ENCODE measurements at regions of chr1 and their contacts with region 1.

Region 1: GRCh38 chr1:48498096-48498791 is 26.2 kb upstream of the SPATA6 start:
- DNase-seq: peak; percentile 58 to 92
- H3K4me3 ChIP-seq: no peak overlapping the region
- H3K27ac ChIP-seq: no peak overlapping the region
- H3K4me1 ChIP-seq: peaks cover 0 to 21% (median 11%) of the 10 kb centered on the region in 4 experiments; a peak in 5 of 7 replicates
- H3K27me3 ChIP-seq: no peaks in the 10 kb centered on the region
- CTCF ChIP-seq: peak; percentile 76 to 95 (median 90)
- EP300 ChIP-seq: no peak
- POLR2A ChIP-seq: no peak
- RAD21 ChIP-seq: peak; percentile 72 to 75

Region 2: DNA sequence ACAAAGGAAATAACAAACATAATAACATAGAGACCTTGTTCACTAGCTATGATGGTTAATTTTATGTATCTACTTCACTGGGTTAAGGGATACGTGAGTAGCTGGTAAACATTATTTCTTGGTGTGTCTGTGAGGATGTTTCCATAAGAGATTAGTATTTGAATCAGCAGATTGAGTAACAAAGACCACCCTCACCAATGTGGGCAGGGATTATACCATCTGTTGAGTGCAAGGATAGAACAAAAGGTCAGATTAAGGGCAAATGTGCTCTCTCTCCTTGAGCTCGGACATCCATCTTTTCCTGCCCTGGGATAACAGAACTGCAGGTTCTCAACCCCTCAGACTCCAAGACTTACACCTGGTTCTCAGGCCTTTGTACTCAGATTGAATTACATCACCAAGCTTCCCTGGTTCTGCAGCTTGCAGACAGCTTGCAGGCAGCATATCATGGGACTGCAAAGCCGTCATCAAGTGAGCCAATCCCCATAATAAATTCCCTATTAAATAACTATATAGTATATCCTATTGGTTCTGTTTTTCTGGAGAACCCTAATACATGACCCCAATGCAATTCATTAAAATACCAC is 35.4 kb before region 1 on chr1:
- CTCF ChIA-PET with region 1: interaction called, 10 read pairs
- POLR2A ChIA-PET with region 1: no interaction called
- DNase-seq: no peak
- H3K4me3 ChIP-seq: no peak overlapping the region
- H3K27ac ChIP-seq: no peak overlapping the region
- H3K4me1 ChIP-seq: peaks cover 0 to 5% (median under 1%) of the 10 kb centered on the region in 4 experiments; a peak in 1 of 7 replicates
- H3K27me3 ChIP-seq: peaks cover 0 to 1% (median 0%) of the 10 kb centered on the region in 4 experiments; a peak in 1 of 7 replicates
- CTCF ChIP-seq: no peak
- EP300 ChIP-seq: no peak
- POLR2A ChIP-seq: no peak
- RAD21 ChIP-seq: no peak

Region 3: DNA sequence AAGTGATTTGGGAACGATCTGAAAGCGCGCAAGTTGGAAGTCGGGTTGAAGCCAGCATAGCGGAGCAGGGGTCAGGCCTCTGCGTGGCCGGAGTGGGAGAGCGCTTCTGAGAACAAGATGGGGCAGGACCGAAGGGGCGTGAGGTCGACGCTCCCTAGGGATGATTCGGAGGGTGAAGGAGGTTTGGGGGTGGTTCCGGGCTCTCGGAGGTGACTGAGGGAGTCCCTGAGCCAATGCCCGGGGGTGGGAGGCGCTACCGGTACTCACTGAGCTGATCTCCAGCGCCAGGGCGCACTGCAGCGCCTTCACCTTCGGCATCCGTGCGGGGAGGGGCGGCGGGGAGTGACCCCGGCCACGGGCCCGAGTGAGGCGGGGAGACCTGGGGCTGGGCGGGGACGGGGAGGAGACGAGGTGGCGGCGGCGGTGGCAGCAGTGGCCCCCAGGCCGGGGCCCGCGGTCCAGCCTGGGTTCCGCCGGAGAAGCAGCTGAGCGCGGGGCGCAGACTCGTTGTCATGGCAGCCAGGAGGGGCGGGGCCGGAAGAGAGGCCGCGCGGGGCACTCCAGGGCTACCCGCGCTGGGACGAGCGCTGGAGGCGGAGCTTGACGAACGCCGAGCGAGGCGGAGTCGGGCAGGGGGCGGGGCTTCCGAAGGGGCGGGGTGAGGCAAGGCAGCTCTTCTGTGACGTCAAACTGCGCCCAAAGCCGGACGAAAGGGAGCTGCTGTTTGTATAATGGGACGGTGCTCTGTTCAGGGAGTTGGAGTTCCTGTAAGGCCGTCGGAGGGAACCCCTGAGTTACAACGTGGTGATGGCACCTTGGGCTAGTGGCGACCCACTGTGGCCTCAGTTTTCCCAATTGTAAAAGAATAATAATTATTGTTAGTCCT is 26.3 kb before region 1 on chr1 and contains the start of gene SPATA6:
- CTCF ChIA-PET with region 1: interaction called, 12 read pairs
- POLR2A ChIA-PET with region 1: interaction called, 3 read pairs
- DNase-seq: peak; percentile 89 to 97
- H3K4me3 ChIP-seq: peak within 1 kb of the TSS; percentile 43 to 88 (median 78)
- H3K27ac ChIP-seq: peak within 1 kb of the TSS; percentile 67; the same call in 1 of the 2 replicates
- H3K4me1 ChIP-seq: peaks cover 0 to 11% (median 6%) of the 10 kb centered on the region in 4 experiments; a peak in 4 of 7 replicates
- H3K27me3 ChIP-seq: no peaks in the 10 kb centered on the region
- CTCF ChIP-seq: no peak
- EP300 ChIP-seq: no peak
- POLR2A ChIP-seq: peak; percentile 77 to 89
- RAD21 ChIP-seq: peak in 1 of 2 experiments; percentile 12; a peak in 1 of 4 replicates
- total RNA-seq, gene SPATA6: 11.0 and 17.2 TPM in 2 replicates

Region 4: DNA sequence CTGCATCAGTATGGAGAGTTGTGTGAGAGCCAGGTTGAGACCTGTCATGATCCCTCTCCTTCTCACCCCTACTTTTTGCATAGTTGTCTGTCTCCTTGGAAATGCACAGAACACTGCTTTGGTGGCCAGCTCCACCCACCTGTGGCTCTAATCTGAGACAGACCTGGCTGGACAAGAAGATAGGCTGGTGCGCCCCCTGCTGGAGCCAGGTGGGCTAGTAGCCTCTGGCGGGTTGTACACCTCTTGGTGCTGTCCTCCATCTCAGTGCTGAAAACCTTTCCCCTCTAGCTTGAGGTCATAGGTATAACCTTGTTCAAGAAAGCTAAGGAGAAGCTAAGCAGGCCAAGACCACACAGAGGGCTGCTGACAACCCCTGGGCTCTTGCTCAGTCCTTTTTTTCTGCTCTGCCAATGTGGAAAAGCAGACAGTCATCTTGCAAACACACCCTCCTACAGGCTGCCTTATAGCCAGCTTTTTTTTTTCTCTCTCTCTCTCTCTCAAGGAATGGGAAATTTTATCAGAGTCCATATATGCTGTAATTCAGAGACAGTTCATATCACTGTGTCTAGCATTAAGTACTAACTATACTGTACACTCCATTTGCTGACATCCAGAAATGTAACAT is 32.6 kb after region 1 on chr1:
- CTCF ChIA-PET with region 1: interaction called, 76 read pairs
- POLR2A ChIA-PET with region 1: no interaction called
- DNase-seq: peak; percentile 85 to 97
- H3K4me3 ChIP-seq: no peak overlapping the region
- H3K27ac ChIP-seq: no peak overlapping the region
- H3K4me1 ChIP-seq: peaks cover 0 to 4% (median under 1%) of the 10 kb centered on the region in 4 experiments; a peak in 3 of 7 replicates
- H3K27me3 ChIP-seq: no peaks in the 10 kb centered on the region
- CTCF ChIP-seq: peak; percentile 93 to 99 (median 98)
- EP300 ChIP-seq: no peak
- POLR2A ChIP-seq: no peak
- RAD21 ChIP-seq: peak; percentile 90